Activated CD4-positive, alpha-beta T cell treated with anti-CD3 and anti-CD28 coated beads for 36 hours (primary cell): ENCODE measurements at regions of chr2 and their contacts with region 1.

Region 1: DNA sequence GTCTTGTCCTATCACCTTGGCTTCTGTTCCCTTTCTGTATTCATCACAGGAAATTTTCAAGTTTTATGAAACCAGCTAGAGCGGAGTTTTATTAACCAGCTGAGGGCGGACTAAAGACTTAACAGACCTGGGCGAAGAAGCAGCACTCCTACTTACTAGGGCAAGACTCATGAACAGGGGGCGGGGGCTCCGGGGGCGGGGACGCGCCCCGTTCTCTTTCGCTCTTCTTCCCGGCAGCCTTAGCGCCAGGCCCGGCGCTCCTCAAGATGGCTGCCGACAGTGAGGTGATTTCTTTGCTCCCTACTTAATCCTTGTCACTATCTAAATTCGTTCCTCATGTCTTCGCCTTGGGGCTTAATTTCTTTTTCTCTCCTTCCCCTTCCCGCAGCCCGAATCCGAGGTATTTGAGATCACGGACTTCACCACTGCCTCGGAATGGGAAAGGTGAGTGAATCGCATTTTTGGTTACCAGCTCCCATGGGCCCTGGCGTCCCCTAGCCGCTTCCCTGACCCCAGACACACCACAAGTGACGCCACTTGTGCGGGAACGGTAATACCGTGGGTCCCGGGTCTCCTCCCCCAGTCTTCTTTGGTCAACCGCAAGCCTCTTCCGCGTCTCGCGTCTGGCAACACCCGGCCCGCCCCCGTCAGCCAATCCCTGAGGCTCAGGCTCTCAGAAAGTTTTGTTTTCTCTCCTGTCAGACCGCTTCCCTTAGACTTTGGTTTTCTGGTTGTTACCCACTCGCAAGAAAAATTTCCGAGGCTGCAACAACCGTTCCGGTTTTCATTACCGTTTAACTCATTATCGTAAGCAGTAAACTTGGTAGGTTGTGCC is at the start of gene RAB3GAP1:
- DNase-seq: peak; percentile 96
- ATAC-seq: peak; percentile 79
- H3K4me3 Mint-ChIP-seq: peak within 1 kb of the TSS; percentile 92
- H3K27ac Mint-ChIP-seq: peak within 1 kb of the TSS; percentile 100
- H3K4me1 Mint-ChIP-seq: peaks cover 40% of the 10 kb centered on the region
- H3K27me3 Mint-ChIP-seq: no peaks in the 10 kb centered on the region
- total RNA-seq, gene RAB3GAP1: 34.5 to 39.8 TPM

Region 2: DNA sequence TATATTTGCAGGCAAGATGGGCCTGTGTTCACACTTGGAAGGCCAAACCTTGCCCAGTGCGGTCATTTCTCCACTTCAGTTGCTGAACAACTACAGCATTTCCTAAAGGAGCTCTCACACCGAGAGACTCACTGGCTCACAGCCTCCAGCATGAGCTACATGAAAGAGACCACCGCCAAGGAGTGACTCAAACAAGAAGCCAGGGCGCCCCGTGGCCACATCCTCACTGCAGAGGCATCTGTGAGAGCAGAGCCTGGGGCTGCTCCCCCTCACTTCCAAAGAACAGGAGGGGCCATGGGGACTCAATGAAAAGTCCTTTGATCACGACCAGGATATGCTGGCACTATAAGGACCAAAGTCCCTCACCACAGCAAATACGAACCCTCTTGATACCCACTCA is 383.4 kb before region 1 on chr2:
- CTCF ChIA-PET with region 1: no interaction called
- POLR2A ChIA-PET with region 1: no interaction called
- intact Hi-C with region 1: loop called in 1 of 2 experiments (anchors 5 kb)
- DNase-seq: peak; percentile 89
- ATAC-seq: peak; percentile 92
- H3K4me3 Mint-ChIP-seq: no peak overlapping the region
- H3K27ac Mint-ChIP-seq: peak overlapping the region; percentile 32
- H3K4me1 Mint-ChIP-seq: peaks cover 67% of the 10 kb centered on the region
- H3K27me3 Mint-ChIP-seq: peaks cover 9% of the 10 kb centered on the region

Region 3: GRCh38 chr2:135066710-135067109 is 14.5 kb after region 1 on chr2:
- CTCF ChIA-PET with region 1: interaction called, 12 read pairs
- POLR2A ChIA-PET with region 1: interaction called, 6 read pairs
- intact Hi-C with region 1: no loop called
- DNase-seq: no peak
- ATAC-seq: no peak
- H3K4me3 Mint-ChIP-seq: no peak overlapping the region
- H3K27ac Mint-ChIP-seq: no peak overlapping the region
- H3K4me1 Mint-ChIP-seq: peaks cover 57% of the 10 kb centered on the region
- H3K27me3 Mint-ChIP-seq: no peaks in the 10 kb centered on the region

Region 4: DNA sequence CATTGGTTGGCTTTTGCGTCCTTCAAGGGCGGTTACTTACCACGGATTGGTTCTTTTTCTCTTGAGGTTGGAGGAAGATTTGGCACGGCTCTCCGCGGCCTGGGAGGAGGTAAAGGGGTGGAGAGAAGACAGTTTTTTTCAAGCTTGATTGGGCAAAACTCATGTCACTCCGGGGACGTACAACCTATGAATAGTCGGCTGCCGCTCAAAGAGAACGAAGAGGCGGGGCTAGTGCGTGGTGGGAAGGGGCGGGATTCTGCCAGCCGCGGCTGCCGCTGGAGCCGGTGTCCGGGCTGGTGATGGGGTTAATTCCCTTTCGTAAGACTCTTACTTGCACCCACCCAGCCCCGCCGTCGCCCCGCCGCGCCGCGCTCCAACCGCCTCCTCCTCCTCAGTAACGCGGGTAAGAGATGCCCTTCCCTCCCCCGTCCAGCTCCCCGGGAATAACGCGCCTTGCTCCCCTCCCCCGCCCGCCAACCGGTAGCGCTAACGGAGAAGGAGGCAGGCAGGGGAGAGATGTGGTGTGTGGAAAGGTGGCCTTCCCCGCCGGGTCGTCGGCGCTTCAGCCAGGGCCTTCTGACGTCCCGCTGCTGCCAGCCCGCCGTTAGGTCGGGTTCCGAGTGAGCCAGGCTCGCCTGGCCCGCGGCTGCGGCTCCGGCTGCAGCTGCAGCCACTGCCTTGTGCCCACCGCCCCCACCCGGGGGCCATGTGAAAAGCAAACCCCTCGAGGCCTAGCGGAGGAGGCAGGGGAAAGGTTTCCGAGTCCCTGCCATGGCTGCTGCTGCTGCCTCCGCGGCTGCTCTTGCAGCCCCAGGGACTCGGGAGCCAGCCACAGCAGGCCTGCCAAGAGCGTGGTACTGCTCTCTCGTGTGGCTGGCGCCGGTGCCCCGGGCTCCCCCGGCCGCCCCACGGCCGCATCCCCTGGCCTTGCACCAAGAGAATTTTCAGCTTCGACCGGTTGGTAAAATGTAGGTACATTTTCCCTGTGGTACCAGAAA is 479.3 kb after region 1 on chr2 and contains the start of gene R3HDM1:
- CTCF ChIA-PET with region 1: interaction called, 5 read pairs
- POLR2A ChIA-PET with region 1: interaction called, 3 read pairs
- intact Hi-C with region 1: loop called (anchors 1 kb)
- DNase-seq: peak; percentile 96
- ATAC-seq: peak; percentile 88
- H3K4me3 Mint-ChIP-seq: no peak within 1 kb of the TSS
- H3K27ac Mint-ChIP-seq: peak within 1 kb of the TSS; percentile 84
- H3K4me1 Mint-ChIP-seq: peaks cover 32% of the 10 kb centered on the region
- H3K27me3 Mint-ChIP-seq: no peaks in the 10 kb centered on the region
- total RNA-seq, gene R3HDM1: 62.6 to 100.0 TPM

Region 5: DNA sequence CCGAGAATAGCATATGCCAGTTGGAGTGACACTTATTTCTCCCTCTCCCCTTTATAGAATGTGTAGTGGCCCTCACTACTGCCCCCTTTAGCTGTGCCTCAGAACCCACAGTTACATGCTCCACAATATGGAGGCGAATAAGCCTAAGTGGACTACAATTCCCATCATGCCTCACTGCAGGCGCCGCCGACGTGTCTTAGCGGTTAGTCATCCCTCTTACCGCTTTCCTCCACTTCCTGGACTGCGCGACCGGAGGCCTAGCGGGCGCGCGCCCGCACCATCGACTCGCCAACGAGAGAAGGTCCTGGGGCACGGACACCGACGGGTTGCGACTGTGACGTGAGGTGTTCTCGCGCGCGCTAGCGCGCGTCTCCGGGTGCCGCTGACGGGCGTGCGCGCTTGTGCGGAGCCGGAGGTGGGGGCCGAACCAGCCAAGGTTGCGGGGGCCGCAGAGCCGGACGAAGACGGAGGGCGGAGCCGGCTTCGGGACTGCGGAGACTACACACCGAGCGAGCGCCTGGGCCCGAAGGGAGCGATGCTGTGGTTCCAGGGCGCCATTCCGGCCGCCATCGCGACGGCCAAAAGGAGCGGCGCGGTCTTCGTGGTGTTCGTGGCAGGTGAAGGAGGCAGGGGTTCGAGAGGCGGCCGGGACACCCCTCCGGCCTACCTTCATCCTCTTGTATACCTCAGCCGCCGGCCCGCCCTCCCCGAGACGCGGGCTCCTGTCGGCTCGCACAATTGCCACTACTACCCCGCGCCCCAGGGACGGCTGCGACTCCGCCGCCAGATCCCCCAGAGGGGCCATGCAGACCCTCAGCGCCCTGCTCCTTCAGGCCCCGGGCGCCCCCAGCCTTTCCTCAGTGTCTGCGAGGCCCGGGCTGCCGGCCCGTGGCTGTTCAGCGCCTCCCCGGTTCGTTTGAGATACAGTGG is 689.4 kb after region 1 on chr2 and contains the start of gene UBXN4:
- CTCF ChIA-PET with region 1: no interaction called
- POLR2A ChIA-PET with region 1: no interaction called
- intact Hi-C with region 1: loop called (anchors 1 kb)
- DNase-seq: peak; percentile 98
- ATAC-seq: peak; percentile 93
- H3K4me3 Mint-ChIP-seq: peak within 1 kb of the TSS; percentile 97
- H3K27ac Mint-ChIP-seq: peak within 1 kb of the TSS; percentile 99
- H3K4me1 Mint-ChIP-seq: peaks cover 35% of the 10 kb centered on the region
- H3K27me3 Mint-ChIP-seq: no peaks in the 10 kb centered on the region
- total RNA-seq, gene UBXN4: 97.0 to 104 TPM

Region 6: DNA sequence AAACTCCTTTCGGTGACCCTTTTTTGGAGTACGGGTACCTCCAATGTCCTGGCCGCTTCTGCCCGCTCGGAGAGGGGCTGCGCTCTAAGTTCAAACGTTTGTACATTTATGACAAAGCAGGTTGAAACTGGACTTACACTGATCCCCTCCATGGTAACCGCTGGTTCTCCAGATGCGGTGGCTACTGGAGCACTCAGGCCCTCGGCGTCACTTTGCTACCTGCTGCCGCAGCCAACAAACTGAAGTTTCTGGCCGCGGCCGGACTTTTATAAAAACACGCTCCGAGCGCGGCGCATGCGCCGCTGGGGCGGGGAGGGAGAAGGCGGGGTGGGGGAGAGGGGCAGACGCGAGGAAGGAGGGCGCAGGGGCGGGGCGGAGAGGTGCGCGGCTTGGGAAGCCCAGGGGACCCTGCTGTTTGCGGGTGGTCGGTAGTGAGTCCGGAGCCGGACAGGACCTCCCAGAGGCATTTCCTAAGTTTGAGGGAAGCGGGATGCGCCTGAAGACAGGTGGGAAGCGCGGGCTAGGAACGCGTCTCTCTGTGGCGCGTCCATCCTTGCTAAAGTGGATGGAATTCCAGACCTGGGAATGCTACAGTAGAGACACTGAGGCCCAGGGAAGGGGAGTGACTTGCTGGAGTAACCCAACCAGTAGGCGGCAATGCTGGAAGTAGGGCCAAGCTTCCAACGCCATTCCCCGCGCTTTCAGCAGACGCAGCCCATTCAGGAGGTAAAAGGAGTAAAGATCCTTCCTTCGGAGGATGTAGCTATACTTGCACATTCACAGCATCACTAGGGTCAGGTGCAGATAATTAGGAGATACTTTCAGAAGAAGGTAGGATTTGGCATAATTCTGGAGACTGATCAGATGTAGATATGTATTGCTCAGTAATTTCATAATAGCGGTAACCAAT is 1065.9 kb after region 1 on chr2 and contains the start of gene CXCR4:
- CTCF ChIA-PET with region 1: no interaction called
- POLR2A ChIA-PET with region 1: no interaction called
- intact Hi-C with region 1: loop called in 1 of 2 experiments (anchors 5 kb)
- DNase-seq: peak; percentile 90
- ATAC-seq: peak; percentile 34
- H3K4me3 Mint-ChIP-seq: peak within 1 kb of the TSS; percentile 94
- H3K27ac Mint-ChIP-seq: peak within 1 kb of the TSS; percentile 93
- H3K4me1 Mint-ChIP-seq: peaks cover 60% of the 10 kb centered on the region
- H3K27me3 Mint-ChIP-seq: peaks cover 2% of the 10 kb centered on the region
- total RNA-seq, gene CXCR4: 75.4 to 89.3 TPM